Common myeloid progenitor, CD34-positive (primary cell): ENCODE measurements at regions of chr6 and their contacts with region 1.

Region 1: DNA sequence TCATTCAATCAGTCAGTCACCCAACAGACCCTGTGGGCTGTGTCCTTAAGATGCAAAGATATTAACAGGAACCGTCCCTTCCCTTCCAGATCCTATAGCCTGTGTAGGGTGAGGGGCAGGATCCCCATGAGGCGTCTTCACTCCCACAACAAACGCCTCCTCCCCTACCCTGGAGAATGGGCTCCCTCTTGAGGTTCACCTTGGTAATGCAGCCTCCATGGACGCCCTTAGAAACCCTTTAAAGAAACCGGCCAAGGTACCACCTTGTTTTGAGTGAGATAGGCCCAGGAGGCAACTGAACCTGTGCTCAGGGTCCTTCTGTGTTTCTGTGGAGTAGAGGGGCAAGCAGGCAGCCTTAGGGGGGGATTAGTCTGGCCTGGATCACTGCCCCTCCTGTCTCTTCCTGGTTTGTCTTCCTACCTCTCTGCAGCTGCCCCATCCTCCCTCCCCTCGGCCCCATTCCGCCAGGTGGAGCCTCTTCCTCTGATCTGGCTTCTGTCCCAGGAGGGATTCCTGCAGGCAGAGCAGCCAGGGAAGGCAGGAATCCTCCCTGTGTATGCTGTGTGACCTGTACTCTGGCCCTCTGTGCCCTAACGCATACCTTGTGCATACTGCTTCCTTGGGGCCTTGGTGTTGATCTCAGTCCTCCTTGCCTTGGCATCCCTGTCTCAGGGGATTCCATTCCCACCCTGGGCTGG is 6.6 kb upstream of the GUCA1A start:
- DNase-seq: peak; percentile 65 to 82 (median 70)
- H3K4me3 ChIP-seq: no peak overlapping the region
- H3K27ac ChIP-seq: no peak overlapping the region
- H3K4me1 ChIP-seq: no peaks in the 10 kb centered on the region
- H3K27me3 ChIP-seq: no peaks in the 10 kb centered on the region

Region 2: GRCh38 chr6:41344876-41345275 is 821.7 kb before region 1 on chr6:
- CTCF ChIA-PET with region 1: no interaction called
- POLR2A ChIA-PET with region 1: no interaction called
- DNase-seq: peak in 2 of 3 donors; percentile 61 to 73
- H3K4me3 ChIP-seq: no peak overlapping the region
- H3K27ac ChIP-seq: no peak overlapping the region
- H3K4me1 ChIP-seq: peaks cover 0 to 13% (median 5%) of the 10 kb centered on the region in 4 experiments
- H3K27me3 ChIP-seq: peaks cover 0 to 3% (median 0%) of the 10 kb centered on the region in 5 experiments

Region 3: GRCh38 chr6:42136508-42137193 is 29.9 kb before region 1 on chr6:
- CTCF ChIA-PET with region 1: interaction called, 18 read pairs
- POLR2A ChIA-PET with region 1: no interaction called
- DNase-seq: peak; percentile 79 to 93 (median 91)
- H3K4me3 ChIP-seq: peak overlapping the region in 6 of 7 experiments; percentile 19 to 71 (median 36)
- H3K27ac ChIP-seq: peak overlapping the region in 1 of 2 experiments; percentile 62
- H3K4me1 ChIP-seq: peaks cover 0 to 27% (median 21%) of the 10 kb centered on the region in 4 experiments
- H3K27me3 ChIP-seq: peaks cover 0 to 6% (median 1%) of the 10 kb centered on the region in 5 experiments

Region 4: DNA sequence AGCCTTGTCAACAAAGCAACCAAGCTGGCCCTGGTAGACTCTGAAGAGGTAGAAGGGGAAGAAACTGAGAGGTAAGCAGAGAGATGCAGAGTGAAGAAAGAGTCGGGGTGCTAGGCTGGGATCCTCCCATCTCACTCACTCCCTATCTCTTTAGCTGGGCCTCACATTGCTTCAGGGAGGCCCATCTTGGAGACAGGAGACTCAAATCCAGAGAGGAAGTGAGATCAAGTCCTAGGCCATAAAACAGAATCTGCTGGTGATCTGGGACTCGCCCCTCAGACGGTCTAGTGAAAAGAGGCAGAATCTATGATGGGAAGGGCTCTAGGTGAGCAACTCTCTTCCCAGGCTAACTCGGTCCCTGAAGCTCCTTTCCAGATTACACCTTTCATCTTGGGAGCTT is 28.8 kb after region 1 on chr6:
- CTCF ChIA-PET with region 1: no interaction called
- POLR2A ChIA-PET with region 1: no interaction called
- DNase-seq: no peak
- H3K4me3 ChIP-seq: no peak overlapping the region
- H3K27ac ChIP-seq: no peak overlapping the region
- H3K4me1 ChIP-seq: no peaks in the 10 kb centered on the region
- H3K27me3 ChIP-seq: no peaks in the 10 kb centered on the region

Region 5: GRCh38 chr6:42269553-42269952 is 103.0 kb after region 1 on chr6:
- CTCF ChIA-PET with region 1: no interaction called
- POLR2A ChIA-PET with region 1: no interaction called
- DNase-seq: no peak
- H3K4me3 ChIP-seq: no peak overlapping the region
- H3K27ac ChIP-seq: no peak overlapping the region
- H3K4me1 ChIP-seq: no peaks in the 10 kb centered on the region
- H3K27me3 ChIP-seq: no peaks in the 10 kb centered on the region

Region 6: GRCh38 chr6:42304053-42304712 is 137.6 kb after region 1 on chr6:
- CTCF ChIA-PET with region 1: no interaction called
- POLR2A ChIA-PET with region 1: no interaction called
- DNase-seq: no peak
- H3K4me3 ChIP-seq: no peak overlapping the region
- H3K27ac ChIP-seq: no peak overlapping the region
- H3K4me1 ChIP-seq: no peaks in the 10 kb centered on the region
- H3K27me3 ChIP-seq: no peaks in the 10 kb centered on the region